GM10248 (cell line): ENCODE measurements at regions of chr3 and their contacts with region 1.

Region 1: DNA sequence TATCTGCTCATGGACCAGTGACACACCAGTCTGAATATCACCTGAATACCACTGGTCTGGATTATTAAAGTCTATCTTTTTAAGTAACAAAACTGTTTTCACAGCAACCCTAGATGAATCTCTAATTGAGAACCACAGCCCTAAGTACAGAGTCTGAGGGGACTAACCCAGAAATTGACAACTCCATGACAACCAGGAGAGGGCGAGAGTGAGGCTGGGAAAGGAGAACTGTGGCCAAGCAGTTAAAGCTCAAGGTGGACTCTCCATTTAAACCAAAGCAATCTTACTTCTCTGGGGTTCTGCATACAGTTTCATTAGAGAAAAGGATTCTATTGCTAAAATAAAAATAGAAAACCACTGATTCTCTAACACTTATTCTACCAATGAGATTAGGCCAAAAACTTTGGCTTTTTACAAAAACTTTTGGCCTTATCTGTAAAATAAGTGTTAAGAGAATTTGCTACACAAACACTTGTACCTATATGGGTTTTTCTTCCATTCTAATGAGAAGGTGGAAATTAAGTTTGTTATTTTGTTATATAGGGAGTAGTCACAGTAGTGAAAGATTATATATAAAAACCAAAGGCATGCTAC is 11.4 kb downstream of the NEK10 start:
- DNase-seq: peak; percentile 48
- CTCF ChIP-seq: peak; percentile 80

Region 2: GRCh38 chr3:27345492-27345891 is 12.3 kb before region 1 on chr3:
- CTCF ChIA-PET with region 1: interaction called, 13 read pairs
- POLR2A ChIA-PET with region 1: no interaction called
- DNase-seq: no peak
- CTCF ChIP-seq: no peak

Region 3: DNA sequence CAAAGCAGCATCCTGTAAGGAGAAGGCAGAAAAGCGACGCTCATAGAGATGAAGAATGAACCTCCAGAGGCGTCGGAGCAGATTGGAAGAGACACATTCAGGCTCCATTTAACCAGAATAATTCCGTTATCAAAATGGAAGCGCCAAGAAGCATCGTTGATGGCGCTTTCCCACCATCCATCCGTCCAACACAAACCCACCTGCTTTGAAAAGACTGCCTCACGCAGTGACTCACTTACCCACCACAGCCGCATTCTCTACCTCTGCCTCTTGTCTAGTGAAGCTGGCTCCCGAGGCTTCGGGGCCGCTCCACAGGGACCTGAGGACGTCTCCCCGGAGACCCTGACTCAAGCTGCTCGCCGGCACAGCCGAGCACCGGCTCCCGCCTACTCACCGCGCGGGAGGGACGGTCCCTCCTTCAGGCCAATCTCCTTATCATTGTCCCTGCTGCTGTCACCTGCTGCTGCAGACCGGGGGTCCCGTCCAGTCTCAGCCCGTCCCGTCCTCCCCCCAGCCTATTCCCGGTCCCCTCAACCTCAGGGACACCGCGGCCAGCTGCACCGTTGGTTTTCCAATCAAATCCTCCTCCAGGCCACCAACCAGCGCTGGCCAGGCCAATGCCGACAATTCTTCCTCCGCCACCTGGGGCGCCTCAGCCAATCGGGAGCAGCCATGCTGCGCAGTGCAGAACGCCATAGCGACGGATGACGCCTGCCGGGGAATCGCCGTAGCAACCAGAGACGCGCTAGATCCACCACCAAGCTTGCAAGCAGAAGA is 11.3 kb after region 1 on chr3 and contains the start of gene NEK10:
- CTCF ChIA-PET with region 1: interaction called, 30 read pairs
- POLR2A ChIA-PET with region 1: no interaction called
- DNase-seq: peak; percentile 96
- CTCF ChIP-seq: no peak